ENCODE measurements at regions of chr17 and their contacts with region 1.

Region 1: DNA sequence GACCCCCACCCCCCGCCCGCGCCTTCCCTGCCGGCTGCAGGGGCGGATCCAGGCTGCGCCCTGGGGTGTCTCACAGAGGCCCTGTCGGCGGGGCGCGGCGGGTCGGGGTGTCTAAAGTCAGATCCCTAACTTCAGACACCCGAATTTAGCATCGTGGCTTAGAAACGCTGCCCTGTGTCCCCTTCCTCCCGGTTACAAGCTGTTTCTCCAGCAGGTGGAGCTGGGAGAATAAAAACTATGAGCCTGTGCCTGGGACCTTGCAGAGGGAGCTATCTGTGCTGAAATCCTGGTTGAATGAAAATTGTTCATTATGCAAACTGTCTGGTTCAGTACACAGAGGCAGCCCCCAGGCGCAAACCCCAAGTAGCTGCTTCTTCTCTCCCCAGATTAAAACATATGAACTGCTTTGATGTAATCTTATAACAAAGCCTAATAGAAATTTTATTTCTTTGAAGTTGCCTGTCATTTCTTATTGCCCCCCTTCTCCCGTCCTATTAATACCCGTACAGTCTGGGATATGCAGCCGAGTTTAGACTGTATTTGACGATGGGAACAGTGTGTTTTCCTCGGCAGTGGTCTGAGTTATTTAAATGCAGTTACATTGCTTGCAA is 79.0 kb downstream of the RPA1 start:
- DNase-seq: peak in 4 of 5 donors; percentile 52 to 65 (median 59)
- ATAC-seq: peak; percentile 63 to 86 (median 84)
- H3K4me3 ChIP-seq: peak overlapping the region in 8 of 12 donors; percentile 20 to 46 (median 30)
- H3K27ac ChIP-seq: no peak overlapping the region
- H3K4me1 ChIP-seq: peaks cover 0 to 28% (median 10%) of the 10 kb centered on the region in 12 donors
- H3K27me3 ChIP-seq: peaks cover 0 to 52% (median 15%) of the 10 kb centered on the region in 9 donors
- CTCF ChIP-seq: peak; percentile 47 to 86 (median 75)
- POLR2A ChIP-seq: no peak

Region 2: DNA sequence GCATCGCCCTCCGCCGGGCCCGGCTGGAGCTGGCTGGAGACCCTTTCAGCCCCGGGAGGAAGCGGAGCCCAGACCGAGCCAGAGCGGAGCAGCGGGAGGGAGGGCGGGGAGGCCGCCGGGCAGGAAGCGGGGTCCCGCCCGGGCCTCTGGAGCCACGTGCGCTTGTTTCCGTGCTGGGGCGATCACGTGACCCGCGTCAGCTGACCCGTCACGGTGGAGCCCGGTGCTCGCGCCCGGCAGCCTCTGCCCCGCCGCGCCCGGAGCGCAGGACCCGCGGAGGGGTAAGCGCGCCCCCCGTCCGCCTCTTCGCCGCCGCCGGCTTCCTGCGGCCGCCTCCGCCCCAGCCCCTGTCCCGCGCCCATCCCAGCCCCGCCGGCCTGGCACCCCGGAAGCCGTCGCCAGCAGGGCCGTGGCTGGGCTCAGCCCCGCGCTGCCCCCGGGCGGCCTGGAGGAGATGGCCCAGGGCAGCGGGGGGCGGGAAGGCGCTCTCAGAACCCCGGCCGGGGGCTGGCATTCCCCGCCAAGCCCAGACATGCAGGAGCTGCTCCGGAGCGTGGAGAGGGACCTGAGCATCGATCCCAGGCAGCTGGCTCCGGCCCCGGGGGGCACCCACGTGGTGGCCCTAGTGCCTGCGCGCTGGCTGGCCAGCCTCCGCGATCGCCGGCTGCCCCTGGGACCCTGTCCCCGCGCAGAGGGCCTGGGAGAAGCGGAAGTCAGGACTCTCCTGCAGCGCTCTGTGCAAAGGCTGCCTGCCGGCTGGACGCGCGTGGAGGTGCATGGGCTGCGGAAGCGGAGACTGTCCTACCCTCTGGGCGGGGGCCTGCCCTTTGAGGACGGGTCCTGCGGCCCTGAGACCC is 184.1 kb before region 1 on chr17 and contains the start of gene WDR81:
- intact Hi-C with region 1: loop called in 1 of 10 experiments (anchors 5 kb)
- DNase-seq: peak; percentile 94 to 96 (median 96)
- ATAC-seq: peak; percentile 48 to 86 (median 84)
- H3K4me3 ChIP-seq: peak within 1 kb of the TSS; percentile 52 to 87 (median 66)
- H3K27ac ChIP-seq: peak within 1 kb of the TSS; percentile 64 to 96 (median 88)
- H3K4me1 ChIP-seq: peaks cover 0 to 87% (median 32%) of the 10 kb centered on the region in 12 donors
- H3K27me3 ChIP-seq: no peaks in the 10 kb centered on the region
- CTCF ChIP-seq: peak in 2 of 12 donors; percentile 8 to 25
- POLR2A ChIP-seq: peak; percentile 24 to 35
- total RNA-seq, gene WDR81: 7.2 to 29.0 (median 9.3) TPM

Region 3: DNA sequence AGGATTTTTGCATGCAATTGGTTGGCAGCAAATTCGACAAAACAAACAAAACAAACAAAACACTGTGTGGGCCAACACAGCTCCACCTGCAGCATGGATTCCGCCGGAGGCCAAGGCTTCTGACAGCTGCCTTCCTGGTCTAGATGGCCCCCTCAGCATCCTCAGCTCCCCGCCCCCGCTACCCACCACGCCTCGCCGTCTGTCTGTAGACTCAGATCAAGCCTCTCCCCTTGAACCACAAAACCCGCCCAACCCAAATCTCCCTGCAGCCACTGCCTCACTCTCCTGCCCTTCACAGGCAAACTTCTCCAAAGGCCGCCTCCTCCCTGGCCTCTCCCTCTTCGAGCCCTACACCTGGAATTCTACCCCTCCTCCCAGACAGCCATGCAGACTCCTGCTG is 58.4 kb after region 1 on chr17:
- intact Hi-C with region 1: no loop called
- DNase-seq: no peak
- ATAC-seq: no peak
- H3K4me3 ChIP-seq: no peak overlapping the region
- H3K27ac ChIP-seq: peak overlapping the region in 1 of 12 donors; percentile 71
- H3K4me1 ChIP-seq: peaks cover 0 to 16% (median 3%) of the 10 kb centered on the region in 12 donors
- H3K27me3 ChIP-seq: no peaks in the 10 kb centered on the region
- CTCF ChIP-seq: no peak
- POLR2A ChIP-seq: no peak

Region 4: GRCh38 chr17:2041561-2042366 is 133.0 kb after region 1 on chr17 and contains the start of gene OVCA2:
- intact Hi-C with region 1: loop called in 3 of 10 experiments (anchors 5 kb)
- DNase-seq: peak; percentile 95 to 97 (median 95)
- ATAC-seq: peak; percentile 77 to 96 (median 93)
- H3K4me3 ChIP-seq: peak within 1 kb of the TSS; percentile 43 to 87 (median 76)
- H3K27ac ChIP-seq: peak within 1 kb of the TSS; percentile 81 to 97 (median 93)
- H3K4me1 ChIP-seq: peaks cover 3 to 38% (median 22%) of the 10 kb centered on the region in 12 donors
- H3K27me3 ChIP-seq: no peaks in the 10 kb centered on the region
- CTCF ChIP-seq: peak; percentile 35 to 81 (median 65)
- POLR2A ChIP-seq: peak in 1 of 2 donors; percentile 77
- total RNA-seq, gene OVCA2: 16.0 to 30.2 (median 20.0) TPM

Region 5: DNA sequence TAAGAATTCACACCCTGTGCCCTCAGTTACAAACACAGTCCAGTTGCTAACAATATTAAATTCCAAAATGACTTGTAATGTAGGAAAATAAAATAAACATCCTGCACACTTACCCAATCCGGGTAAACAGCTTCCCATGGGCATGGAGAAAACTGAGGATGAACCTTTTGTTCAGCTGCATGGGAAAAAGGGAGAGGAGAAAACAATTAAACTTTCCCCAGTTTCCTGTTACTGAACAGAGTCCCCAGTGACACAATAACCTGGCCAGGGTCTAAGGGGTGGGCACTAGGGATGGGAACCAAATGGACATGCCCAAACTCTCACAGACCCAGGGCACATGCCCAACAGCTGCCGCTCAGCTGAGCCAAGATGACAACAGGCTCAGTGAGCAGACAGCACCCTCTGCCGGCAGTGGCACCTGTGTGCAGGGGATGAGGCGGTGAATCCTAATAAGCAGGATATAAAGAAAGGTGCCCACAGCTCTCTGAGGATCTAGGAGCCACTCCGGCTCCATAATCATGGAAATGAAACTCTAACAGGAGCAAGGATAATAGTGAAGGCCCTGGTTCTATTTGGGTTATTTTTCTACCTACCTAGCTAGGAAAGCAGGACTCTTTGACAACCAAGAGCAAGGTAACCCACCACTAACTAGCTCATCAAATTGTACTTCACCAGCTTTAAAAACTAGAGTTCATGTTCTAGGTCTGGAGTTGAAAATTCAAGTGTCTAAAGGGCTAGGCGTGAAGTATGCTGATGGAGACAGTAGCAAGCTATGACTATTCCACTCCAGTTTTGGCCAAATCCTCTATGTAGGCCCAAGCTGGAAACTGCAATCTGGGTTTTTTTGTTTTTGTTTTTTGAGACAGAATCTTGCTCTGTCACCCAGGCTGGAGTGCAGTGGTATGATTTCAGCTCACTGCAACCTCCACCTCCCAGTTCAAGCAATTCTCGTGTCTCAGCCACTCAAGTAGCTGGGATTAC is 336.0 kb after region 1 on chr17:
- intact Hi-C with region 1: loop called in 1 of 10 experiments (anchors 10 kb)
- DNase-seq: peak; percentile 84 to 94 (median 87)
- ATAC-seq: peak; percentile 79 to 92 (median 88)
- H3K4me3 ChIP-seq: no peak overlapping the region
- H3K27ac ChIP-seq: peak overlapping the region in 11 of 12 donors; percentile 22 to 75 (median 56)
- H3K4me1 ChIP-seq: peaks cover 0 to 26% (median 13%) of the 10 kb centered on the region in 12 donors
- H3K27me3 ChIP-seq: no peaks in the 10 kb centered on the region
- CTCF ChIP-seq: peak in 11 of 12 donors; percentile 95 to 100 (median 97)
- POLR2A ChIP-seq: no peak

Region 6: DNA sequence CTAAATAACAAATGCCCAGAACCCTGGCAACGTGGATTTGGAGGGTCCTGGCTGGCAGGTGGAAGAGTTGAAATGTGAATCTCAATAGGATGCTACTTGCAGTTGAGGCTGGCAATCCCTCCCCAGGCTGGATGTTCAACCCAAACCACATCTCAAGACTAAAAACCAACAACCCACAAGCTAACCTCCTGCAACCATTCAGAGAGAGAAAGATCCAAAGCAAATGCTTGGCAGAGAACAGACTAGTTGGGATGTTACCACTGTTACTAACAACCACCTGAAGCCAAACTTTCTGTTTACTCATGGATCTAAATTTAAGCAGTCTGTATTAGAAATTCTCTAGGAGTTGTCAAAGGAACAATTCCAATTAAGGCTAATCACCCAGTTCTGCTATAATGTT is 366.9 kb after region 1 on chr17:
- intact Hi-C with region 1: loop called in 8 of 10 experiments (anchors 5 to 10 kb)
- DNase-seq: no peak
- ATAC-seq: no peak
- H3K4me3 ChIP-seq: no peak overlapping the region
- H3K27ac ChIP-seq: no peak overlapping the region
- H3K4me1 ChIP-seq: peaks cover 0 to 4% (median 0%) of the 10 kb centered on the region in 12 donors
- H3K27me3 ChIP-seq: no peaks in the 10 kb centered on the region
- CTCF ChIP-seq: no peak
- POLR2A ChIP-seq: no peak

Region 7: GRCh38 chr17:2282297-2282873 is 373.6 kb after region 1 on chr17:
- intact Hi-C with region 1: loop called in 8 of 10 experiments (anchors 5 to 10 kb)
- DNase-seq: no peak
- ATAC-seq: peak in 3 of 4 donors; percentile 48 to 80 (median 65)
- H3K4me3 ChIP-seq: no peak overlapping the region
- H3K27ac ChIP-seq: no peak overlapping the region
- H3K4me1 ChIP-seq: peaks cover 0 to 16% (median 0%) of the 10 kb centered on the region in 12 donors
- H3K27me3 ChIP-seq: no peaks in the 10 kb centered on the region
- CTCF ChIP-seq: peak; percentile 42 to 72 (median 62)
- POLR2A ChIP-seq: no peak

Measured in heart left ventricle (tissue), 16 donors.